GM23248 (cell line): ENCODE measurements at regions of chr1 and their contacts with region 1.

Region 1: GRCh38 chr1:23273450-23274133 is 56.3 kb upstream of the HTR1D start:
- DNase-seq: peak; percentile 84
- H3K4me3 ChIP-seq: no peak overlapping the region
- H3K27ac ChIP-seq: 0 out of 2 replicates have a peak overlapping the region, but pooled peaks have one; percentile 6
- H3K4me1 ChIP-seq: peaks cover 18% of the 10 kb centered on the region; the same call in 1 of the 2 replicates
- H3K27me3 ChIP-seq: no peaks in the 10 kb centered on the region

Region 2: GRCh38 chr1:22952694-22953391 is 320.7 kb before region 1 on chr1:
- in situ Hi-C with region 1: no loop called
- DNase-seq: peak; percentile 18
- H3K4me3 ChIP-seq: no peak overlapping the region
- H3K27ac ChIP-seq: no peak overlapping the region
- H3K4me1 ChIP-seq: no peaks in the 10 kb centered on the region
- H3K27me3 ChIP-seq: peaks cover 68% of the 10 kb centered on the region

Region 3: GRCh38 chr1:22976461-22977243 is 296.9 kb before region 1 on chr1:
- in situ Hi-C with region 1: loop called (anchors 5 kb)
- DNase-seq: peak; percentile 94
- H3K4me3 ChIP-seq: no peak overlapping the region
- H3K27ac ChIP-seq: no peak overlapping the region
- H3K4me1 ChIP-seq: peaks cover 8% of the 10 kb centered on the region
- H3K27me3 ChIP-seq: no peaks in the 10 kb centered on the region

Region 4: DNA sequence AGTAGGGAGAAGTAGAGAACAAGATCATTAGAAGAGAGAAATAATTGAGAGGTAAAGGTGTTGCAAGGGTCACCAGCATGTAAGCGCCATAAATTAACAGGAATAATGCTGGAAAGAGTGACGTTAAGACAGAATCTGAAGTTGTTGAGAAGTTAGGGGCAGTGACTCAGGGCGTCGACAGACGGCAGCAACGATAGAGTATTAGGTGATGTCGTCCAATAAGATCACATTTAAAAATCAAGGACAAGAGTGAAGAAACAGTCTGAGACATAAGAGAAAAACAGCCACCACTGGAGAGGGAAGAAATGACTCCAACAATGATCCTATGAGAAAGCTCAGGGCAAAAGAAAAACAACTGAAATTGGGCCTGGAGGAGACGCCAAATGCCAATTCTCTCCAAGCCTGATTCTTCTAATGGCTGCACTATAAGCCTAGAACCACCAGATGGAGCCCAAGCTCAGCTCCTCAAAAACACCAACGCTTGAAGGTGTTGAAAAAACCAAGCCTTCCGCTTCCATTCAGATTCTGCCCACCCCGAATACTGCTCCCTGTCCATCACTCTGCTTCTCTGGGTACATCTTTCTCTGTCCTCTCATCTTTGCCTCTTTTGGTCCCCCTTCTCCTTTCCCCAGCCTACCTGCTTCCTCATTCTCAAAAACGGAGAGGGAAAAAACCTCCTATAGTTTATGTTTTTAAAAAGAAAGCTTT is 175.0 kb before region 1 on chr1:
- in situ Hi-C with region 1: loop called (anchors 10 kb)
- DNase-seq: peak; percentile 86
- H3K4me3 ChIP-seq: no peak overlapping the region
- H3K27ac ChIP-seq: peak overlapping the region; percentile 87
- H3K4me1 ChIP-seq: peaks cover 55% of the 10 kb centered on the region
- H3K27me3 ChIP-seq: no peaks in the 10 kb centered on the region

Region 5: DNA sequence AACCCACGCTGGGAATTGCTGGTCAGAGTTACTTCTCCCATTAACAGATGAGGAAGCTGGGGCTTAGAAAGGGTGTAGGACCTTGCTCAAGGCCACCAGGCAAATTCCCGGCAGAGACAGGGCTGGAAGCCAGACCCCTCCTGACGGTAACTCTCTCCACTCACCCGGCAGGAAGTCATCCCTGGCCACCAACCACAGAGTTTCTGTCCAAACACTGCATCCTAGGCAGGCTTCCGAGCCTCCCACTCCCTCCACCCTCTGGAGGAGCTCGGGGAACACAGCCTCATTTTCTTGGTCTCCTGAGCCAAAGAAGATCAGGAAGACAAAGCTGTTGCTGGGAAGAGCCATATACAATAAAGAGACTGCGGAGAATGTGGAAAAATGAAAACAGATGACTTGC is 121.1 kb after region 1 on chr1:
- in situ Hi-C with region 1: no loop called
- DNase-seq: peak; percentile 91
- H3K4me3 ChIP-seq: peak overlapping the region; percentile 38
- H3K27ac ChIP-seq: peak overlapping the region; percentile 89
- H3K4me1 ChIP-seq: peaks cover 25% of the 10 kb centered on the region
- H3K27me3 ChIP-seq: no peaks in the 10 kb centered on the region